ENCODE measurements at regions of chr3 and their contacts with region 1.

Region 1: GRCh38 chr3:96266395-96267190 is 547.8 kb upstream of the EPHA6 start:
- DNase-seq: peak; percentile 81
- H3K4me3 ChIP-seq: no peak overlapping the region
- H3K27ac ChIP-seq: peak overlapping the region; percentile 84
- H3K4me1 ChIP-seq: peaks cover 41% of the 10 kb centered on the region
- H3K27me3 ChIP-seq: no peaks in the 10 kb centered on the region
- CTCF ChIP-seq: no peak
- POLR2A ChIP-seq: no peak

Region 2: DNA sequence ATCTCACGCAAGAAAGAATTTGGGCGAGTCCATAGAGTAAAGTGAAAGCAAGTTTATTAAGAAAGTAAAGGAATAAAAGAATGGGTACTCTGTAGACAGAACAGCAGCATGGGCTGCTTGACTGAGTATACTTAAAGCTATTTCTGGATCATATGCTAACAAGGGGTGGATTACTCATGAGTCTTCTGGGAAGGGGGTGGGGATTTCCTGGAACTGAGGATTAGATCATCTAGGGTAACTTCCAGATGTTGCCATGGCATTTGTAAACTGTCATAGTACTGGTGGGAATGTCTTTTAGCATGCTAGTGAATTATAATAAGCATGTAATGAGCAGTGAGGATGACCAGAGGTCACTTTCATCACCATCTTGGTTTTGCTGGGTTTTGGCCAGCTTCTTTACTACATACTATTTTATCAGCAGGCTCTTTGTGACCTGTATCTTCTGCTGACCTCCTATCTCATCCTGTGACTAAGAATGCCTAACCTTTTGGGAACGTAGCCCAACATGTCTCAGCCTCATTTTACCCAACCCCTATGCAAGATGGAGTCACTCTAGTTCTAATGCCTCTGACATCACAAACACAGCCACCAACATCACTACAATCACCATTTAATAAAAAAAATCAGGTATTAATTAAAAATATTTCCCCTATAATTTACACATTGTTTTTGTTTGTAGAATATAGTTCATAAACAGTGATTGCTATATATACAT is 342.9 kb before region 1 on chr3:
- CTCF ChIA-PET with region 1: no interaction called
- POLR2A ChIA-PET with region 1: no interaction called
- dilution Hi-C with region 1: no loop called
- intact Hi-C with region 1: loop called (anchors 1 kb)
- DNase-seq: peak; percentile 78
- H3K4me3 ChIP-seq: no peak overlapping the region
- H3K27ac ChIP-seq: peak overlapping the region; percentile 76
- H3K4me1 ChIP-seq: peaks cover 3% of the 10 kb centered on the region
- H3K27me3 ChIP-seq: no peaks in the 10 kb centered on the region
- CTCF ChIP-seq: no peak
- POLR2A ChIP-seq: no peak

Region 3: GRCh38 chr3:96225494-96225893 is 41.1 kb before region 1 on chr3:
- CTCF ChIA-PET with region 1: no interaction called
- POLR2A ChIA-PET with region 1: no interaction called
- dilution Hi-C with region 1: no loop called
- intact Hi-C with region 1: loop called (anchors 1 kb)
- DNase-seq: no peak
- H3K4me3 ChIP-seq: no peak overlapping the region
- H3K27ac ChIP-seq: no peak overlapping the region
- H3K4me1 ChIP-seq: peaks cover 3% of the 10 kb centered on the region
- H3K27me3 ChIP-seq: no peaks in the 10 kb centered on the region
- CTCF ChIP-seq: no peak
- POLR2A ChIP-seq: no peak

Region 4: GRCh38 chr3:96354742-96355141 is 88.1 kb after region 1 on chr3:
- CTCF ChIA-PET with region 1: no interaction called
- POLR2A ChIA-PET with region 1: no interaction called
- dilution Hi-C with region 1: no loop called
- intact Hi-C with region 1: loop called (anchors 2 kb)
- DNase-seq: peak; percentile 89
- H3K4me3 ChIP-seq: no peak overlapping the region
- H3K27ac ChIP-seq: no peak overlapping the region
- H3K4me1 ChIP-seq: peaks cover 20% of the 10 kb centered on the region
- H3K27me3 ChIP-seq: no peaks in the 10 kb centered on the region
- CTCF ChIP-seq: no peak
- POLR2A ChIP-seq: no peak

Region 5: DNA sequence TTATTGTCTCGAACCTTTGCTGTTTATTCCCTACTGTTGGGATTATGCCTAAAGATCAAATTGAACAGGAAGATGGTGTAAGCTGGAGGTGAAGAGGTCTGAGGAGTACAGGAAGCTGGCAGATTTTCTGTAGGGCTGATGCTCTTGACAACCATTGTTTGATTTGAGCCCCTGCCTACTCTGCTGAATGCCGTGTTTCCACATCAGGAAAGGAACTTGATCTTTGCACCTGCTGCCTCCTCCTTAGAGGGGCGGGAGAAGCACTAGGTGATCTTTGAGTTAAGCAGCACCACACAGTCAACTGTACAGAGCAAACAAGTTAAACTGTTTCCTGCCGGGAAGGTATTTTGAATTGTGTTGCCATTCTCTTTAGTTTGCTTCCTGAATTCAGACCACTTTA is 183.2 kb after region 1 on chr3:
- CTCF ChIA-PET with region 1: no interaction called
- POLR2A ChIA-PET with region 1: no interaction called
- dilution Hi-C with region 1: no loop called
- intact Hi-C with region 1: loop called (anchors 1 kb)
- DNase-seq: peak; percentile 82
- H3K4me3 ChIP-seq: no peak overlapping the region
- H3K27ac ChIP-seq: peak overlapping the region; percentile 52
- H3K4me1 ChIP-seq: peaks cover 11% of the 10 kb centered on the region
- H3K27me3 ChIP-seq: no peaks in the 10 kb centered on the region
- CTCF ChIP-seq: no peak
- POLR2A ChIP-seq: no peak

Measured in endothelial cell of umbilical vein (primary cell).